ENCODE measurements at regions of chr19 and their contacts with region 1.

Region 1: DNA sequence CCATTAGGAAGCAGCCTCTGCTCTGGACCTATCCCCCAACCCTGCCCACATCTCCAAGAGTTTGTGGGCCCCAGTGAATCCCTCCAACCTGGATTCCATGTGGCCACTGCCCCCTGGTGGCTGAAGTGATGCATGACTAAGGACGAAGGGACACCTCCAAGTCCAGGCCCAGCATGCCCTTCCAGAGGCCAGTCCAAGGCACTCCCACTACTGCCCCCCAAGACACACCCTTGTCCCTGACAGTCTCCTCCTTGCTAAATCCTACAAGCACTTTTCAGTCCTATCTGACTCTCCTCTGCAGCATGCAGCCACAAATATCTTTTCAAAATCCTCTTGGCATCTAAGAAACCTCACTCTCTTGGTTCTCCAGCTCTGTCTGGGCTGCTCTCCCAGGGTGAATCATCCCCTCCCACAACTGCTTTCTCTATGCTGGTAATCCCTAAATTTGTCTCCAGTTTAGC is 33.0 kb downstream of the DEDD2 start:
- DNase-seq: no peak
- ATAC-seq: peak; percentile 95
- H3K4me3 ChIP-seq: no peak overlapping the region
- H3K27ac ChIP-seq: no peak overlapping the region
- H3K4me1 ChIP-seq: no peaks in the 10 kb centered on the region
- H3K27me3 ChIP-seq: no peaks in the 10 kb centered on the region
- CTCF ChIP-seq: peak; percentile 85

Region 2: DNA sequence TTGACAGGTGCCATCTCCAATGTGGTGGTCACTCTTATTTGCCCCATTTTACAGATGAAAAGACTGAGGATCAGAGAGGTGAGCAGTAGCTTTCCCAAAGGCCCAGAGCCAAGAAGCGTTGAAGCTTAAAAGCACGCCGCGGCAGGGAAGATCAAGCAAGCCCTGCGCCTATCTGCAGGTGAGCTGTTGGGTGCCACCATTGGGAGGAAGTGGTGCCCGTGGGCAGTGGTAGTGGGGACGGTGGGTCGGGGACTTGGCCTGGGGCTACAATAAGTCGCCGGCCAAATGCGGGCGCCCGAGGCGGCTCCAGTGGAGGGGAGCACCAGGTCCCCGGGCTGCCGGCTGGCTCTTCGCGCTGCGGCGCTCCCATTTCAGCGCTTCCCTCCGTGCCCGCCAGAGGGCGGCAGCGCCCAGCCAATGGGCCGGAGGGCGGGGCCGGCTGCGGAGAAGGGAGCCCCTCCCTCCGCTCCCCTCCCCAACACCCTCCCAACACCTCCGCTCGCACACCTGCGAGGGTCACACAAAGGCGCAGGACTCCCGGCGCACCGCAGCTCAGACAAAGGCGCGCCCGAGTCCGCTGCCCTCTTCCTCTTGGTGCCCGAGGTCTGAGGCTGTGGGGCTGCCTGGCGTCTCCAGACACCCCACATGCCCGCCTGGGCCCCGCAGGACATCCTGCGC is 51.4 kb before region 1 on chr19:
- CTCF ChIA-PET with region 1: no interaction called
- POLR2A ChIA-PET with region 1: interaction called, 5 read pairs
- in situ Hi-C with region 1: no loop called
- intact Hi-C with region 1: loop called (anchors 2 kb)
- DNase-seq: no peak
- ATAC-seq: peak; percentile 87
- H3K4me3 ChIP-seq: peak overlapping the region; percentile 12 to 31; a peak in 3 of 4 replicates
- H3K27ac ChIP-seq: no peak overlapping the region
- H3K4me1 ChIP-seq: no peaks in the 10 kb centered on the region
- H3K27me3 ChIP-seq: no peaks in the 10 kb centered on the region
- CTCF ChIP-seq: peak; percentile 92

Measured in Panc1 (cell line).